ENCODE measurements at regions of chr16 and their contacts with region 1.

Region 1: DNA sequence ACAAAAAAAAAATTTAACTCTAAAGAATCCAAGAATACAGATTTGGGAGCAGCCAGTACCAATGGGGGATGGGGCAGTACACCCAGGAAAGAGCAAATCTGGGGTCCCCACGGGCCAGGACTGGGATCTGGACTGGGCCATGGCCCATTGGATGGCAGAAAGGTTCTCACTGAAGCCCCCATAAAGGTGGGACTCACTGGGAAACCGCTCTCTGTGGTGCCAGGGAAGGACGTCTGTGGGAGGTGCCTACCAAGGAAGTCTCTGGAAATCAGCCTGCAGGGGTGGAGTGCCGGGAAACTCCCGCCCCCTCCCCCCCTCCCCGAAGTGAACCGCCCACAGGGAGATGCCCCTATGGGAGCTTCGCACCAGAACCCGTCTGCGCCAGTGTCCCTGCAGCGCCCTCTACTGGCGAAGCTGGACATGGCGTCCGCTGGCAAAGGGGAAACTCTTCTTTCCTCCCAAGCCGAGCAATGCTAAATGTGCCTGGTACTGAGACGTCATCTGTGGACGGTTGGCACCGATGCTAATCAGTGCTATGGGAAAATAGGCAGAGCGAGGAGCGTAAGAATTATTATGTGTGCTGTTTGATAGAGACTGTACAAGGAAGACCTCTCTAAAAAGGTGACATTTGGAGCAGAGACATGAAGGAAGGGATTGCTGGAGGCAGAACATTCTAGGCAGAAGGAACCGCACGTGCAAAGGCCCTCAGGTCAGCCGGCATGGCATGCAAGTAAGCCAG is 671.1 kb downstream of the WWOX start:
- DNase-seq: peak; percentile 52
- H3K4me3 Mint-ChIP-seq: no peak overlapping the region
- H3K27ac Mint-ChIP-seq: no peak overlapping the region
- H3K4me1 Mint-ChIP-seq: peaks cover 5% of the 10 kb centered on the region
- H3K27me3 Mint-ChIP-seq: no peaks in the 10 kb centered on the region
- CTCF ChIP-seq: peak; percentile 75

Region 2: GRCh38 chr16:78227855-78228254 is 542.7 kb before region 1 on chr16:
- CTCF ChIA-PET with region 1: no interaction called
- POLR2A ChIA-PET with region 1: no interaction called
- intact Hi-C with region 1: loop called (anchors 10 kb)
- DNase-seq: no peak
- H3K4me3 Mint-ChIP-seq: no peak overlapping the region
- H3K27ac Mint-ChIP-seq: no peak overlapping the region
- H3K4me1 Mint-ChIP-seq: peaks cover 9% of the 10 kb centered on the region
- H3K27me3 Mint-ChIP-seq: no peaks in the 10 kb centered on the region
- CTCF ChIP-seq: peak; percentile 11

Region 3: DNA sequence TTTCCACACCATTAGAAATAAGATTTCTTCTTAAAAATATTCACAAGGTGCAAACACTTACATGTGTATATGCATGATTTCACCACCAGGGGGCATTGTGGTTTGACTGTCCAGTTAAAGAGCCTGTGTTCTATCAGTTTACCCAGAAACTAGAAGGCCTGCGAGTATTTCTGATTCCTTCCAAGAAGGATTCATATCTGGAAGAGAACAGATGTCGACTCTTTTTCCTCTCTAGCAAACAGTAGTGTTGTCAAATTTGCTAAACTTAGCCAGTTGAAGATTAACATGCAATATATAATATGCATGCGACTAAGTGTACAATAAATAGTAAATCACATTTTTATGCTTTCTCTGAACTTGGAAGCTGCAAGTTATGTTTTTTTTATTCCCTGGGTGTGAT is 266.9 kb before region 1 on chr16:
- CTCF ChIA-PET with region 1: interaction called, 3 read pairs
- POLR2A ChIA-PET with region 1: no interaction called
- intact Hi-C with region 1: loop called (anchors 1 kb)
- DNase-seq: peak; percentile 56
- H3K4me3 Mint-ChIP-seq: no peak overlapping the region
- H3K27ac Mint-ChIP-seq: no peak overlapping the region
- H3K4me1 Mint-ChIP-seq: peaks cover 7% of the 10 kb centered on the region
- H3K27me3 Mint-ChIP-seq: no peaks in the 10 kb centered on the region
- CTCF ChIP-seq: peak; percentile 89